H1 (cell line): ENCODE measurements at regions of chr4 and their contacts with region 1.

Region 1: DNA sequence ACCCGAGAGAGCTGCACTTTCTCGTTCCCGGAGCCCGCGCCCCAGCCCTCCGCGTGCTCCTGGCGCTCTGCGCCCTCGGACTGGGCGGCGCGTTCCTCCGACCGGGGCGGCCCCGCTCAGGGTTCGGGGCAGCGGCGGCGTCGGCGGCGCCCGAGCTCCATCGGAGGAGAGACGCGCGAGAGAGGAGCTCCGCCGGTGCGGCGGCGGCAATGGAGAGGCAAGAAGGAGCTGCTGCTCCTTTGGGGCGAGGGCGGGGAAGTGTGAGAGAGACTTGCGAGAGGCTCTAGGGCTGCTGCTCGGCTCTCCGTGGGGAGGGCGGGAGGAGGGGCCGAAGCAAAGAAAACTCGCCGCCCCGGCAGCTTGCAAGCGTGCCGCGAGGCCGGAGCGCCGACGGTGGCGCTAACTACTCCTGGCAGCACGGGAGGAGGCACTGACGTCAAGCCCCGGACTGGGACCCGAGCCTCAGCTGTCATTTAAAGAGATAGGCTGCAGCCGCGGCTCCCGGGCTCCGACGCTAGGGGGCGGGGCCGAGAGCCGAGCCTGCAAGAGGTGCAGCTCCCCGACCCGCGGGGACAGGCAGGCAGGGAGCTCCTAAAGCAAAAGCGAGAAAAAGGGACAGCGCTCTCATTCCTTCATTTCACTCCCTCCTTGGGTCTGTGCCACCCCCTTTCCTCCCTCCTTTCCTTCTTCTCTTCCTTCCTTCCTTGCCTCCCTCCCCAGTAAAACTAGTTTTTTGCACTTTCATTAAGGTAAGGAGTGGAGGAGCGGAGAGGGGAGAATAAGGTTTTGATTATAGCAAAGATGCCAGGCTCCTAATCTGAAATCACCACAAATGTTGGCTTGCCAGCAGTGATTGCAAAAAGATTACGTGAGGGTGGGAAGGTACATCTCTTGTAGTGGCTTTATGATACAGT is at the start of gene KCTD8:
- DNase-seq: peak; percentile 90 to 95
- H3K4me3 ChIP-seq: peak within 1 kb of the TSS; percentile 65 to 72 (median 68)
- H3K27ac ChIP-seq: peak within 1 kb of the TSS; percentile 27; the same call in 1 of the 2 replicates
- H3K4me1 ChIP-seq: no peaks in the 10 kb centered on the region; a peak in 1 of 7 replicates
- H3K27me3 ChIP-seq: peaks cover 0 to 18% (median 9%) of the 10 kb centered on the region in 4 experiments; a peak in 5 of 7 replicates
- CTCF ChIP-seq: peak; percentile 52 to 80 (median 75)
- EP300 ChIP-seq: peak in 1 of 2 experiments; percentile 60; a peak in 1 of 3 replicates
- POLR2A ChIP-seq: peak; percentile 18 to 87
- RAD21 ChIP-seq: peak; percentile 60 to 67
- total RNA-seq, gene KCTD8: 3.5 and 3.7 TPM in 2 replicates

Region 2: DNA sequence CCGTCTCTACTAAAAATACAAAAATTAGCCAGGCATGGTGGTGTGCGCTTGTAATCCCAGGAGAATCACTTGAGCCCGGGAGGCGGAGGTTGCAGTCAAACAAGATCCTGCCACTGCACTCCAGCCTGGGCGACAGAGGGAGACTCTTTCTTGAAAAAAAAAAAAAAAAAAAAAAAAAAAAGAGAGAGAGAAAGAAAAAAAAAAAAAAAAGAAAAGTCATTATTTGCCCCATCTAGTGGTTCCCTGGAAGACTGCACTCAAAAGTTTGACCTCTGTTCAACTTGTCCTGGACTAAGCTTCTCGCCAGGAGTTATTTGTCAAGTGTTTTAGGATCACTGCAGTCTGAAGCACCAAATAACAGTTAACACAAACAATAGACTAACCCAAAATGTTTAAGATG is 45.1 kb after region 1 on chr4:
- CTCF ChIA-PET with region 1: interaction called, 10 read pairs
- POLR2A ChIA-PET with region 1: no interaction called
- DNase-seq: no peak
- H3K4me3 ChIP-seq: no peak overlapping the region
- H3K27ac ChIP-seq: no peak overlapping the region
- H3K4me1 ChIP-seq: no peaks in the 10 kb centered on the region
- H3K27me3 ChIP-seq: no peaks in the 10 kb centered on the region
- CTCF ChIP-seq: peak in 2 of 3 experiments; percentile 40 to 45; a peak in 2 of 4 replicates
- EP300 ChIP-seq: no peak
- POLR2A ChIP-seq: no peak
- RAD21 ChIP-seq: peak; percentile 24 to 43; a peak in 3 of 4 replicates

Region 3: DNA sequence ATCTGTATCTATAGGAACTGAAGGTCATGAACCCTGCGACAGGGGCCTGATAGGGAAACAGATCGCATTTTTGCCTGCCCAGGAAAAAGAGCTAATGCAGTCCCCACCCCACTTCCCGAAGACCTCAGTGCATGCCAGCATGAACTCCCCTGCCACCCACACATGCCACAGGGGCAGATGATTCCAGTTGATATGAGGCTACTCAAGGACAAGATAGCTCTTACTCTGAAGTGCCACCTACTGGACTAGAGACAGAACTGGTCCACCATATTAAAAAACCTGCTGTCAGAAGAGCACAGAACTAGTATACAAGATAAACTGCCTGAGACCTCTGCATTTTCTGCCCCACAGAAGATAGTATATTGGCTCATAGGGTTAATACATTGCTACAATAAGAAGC is 134.6 kb after region 1 on chr4:
- CTCF ChIA-PET with region 1: interaction called, 17 read pairs
- POLR2A ChIA-PET with region 1: no interaction called
- DNase-seq: peak in 1 of 2 experiments; percentile 45
- H3K4me3 ChIP-seq: no peak overlapping the region
- H3K27ac ChIP-seq: no peak overlapping the region
- H3K4me1 ChIP-seq: no peaks in the 10 kb centered on the region
- H3K27me3 ChIP-seq: no peaks in the 10 kb centered on the region
- CTCF ChIP-seq: peak in 2 of 3 experiments; percentile 44 to 62; a peak in 2 of 4 replicates
- EP300 ChIP-seq: no peak
- POLR2A ChIP-seq: no peak
- RAD21 ChIP-seq: peak; percentile 58 to 63